Activated CD4-positive, alpha-beta memory T cell treated with anti-CD3 and anti-CD28 coated beads, Interleukin-2, amount 10 ng/mL, durations not matched to agents 7 days and 5 days (primary cell): ENCODE measurements at regions of chr20 and their contacts with region 1.

Region 1: DNA sequence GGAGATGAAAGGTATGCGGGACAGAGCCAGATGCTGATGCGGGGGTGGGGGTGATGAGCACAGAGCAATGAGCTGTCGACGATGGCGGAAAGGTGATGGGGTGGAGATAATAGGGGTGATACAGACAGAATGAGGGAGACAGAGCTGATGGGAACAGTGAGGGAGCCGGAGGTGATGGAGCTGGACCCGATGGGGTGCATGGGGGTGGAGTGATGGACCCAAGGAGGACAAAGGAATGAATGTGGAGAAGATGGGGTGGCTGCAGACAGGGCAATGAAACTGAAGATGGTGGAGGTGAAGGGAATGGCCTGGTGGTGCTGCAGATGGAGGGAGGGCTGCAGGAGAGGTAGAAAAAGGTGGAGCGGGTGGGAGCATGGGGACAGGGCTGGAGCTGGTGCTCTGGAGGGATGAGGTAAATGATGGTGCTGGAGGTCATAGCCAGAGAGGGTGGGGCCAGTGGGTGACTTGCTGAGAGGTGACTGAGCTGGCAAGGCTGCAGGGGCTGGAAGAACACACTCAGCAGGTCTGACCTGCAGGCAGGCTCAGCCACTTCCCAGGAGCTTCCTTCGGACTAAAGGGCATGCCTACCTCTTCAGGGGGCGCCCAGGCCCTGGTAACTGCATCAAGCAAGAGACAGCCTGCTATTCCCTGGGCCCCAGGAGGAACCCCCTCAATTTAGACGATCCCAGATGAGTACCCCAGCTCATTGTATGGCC is 6.0 kb upstream of the FOXS1 start:
- DNase-seq: no peak
- H3K4me3 Mint-ChIP-seq: no peak overlapping the region
- H3K27ac Mint-ChIP-seq: no peak overlapping the region
- H3K4me1 Mint-ChIP-seq: peaks cover 2% of the 10 kb centered on the region
- H3K27me3 Mint-ChIP-seq: peaks cover 30% of the 10 kb centered on the region

Region 2: DNA sequence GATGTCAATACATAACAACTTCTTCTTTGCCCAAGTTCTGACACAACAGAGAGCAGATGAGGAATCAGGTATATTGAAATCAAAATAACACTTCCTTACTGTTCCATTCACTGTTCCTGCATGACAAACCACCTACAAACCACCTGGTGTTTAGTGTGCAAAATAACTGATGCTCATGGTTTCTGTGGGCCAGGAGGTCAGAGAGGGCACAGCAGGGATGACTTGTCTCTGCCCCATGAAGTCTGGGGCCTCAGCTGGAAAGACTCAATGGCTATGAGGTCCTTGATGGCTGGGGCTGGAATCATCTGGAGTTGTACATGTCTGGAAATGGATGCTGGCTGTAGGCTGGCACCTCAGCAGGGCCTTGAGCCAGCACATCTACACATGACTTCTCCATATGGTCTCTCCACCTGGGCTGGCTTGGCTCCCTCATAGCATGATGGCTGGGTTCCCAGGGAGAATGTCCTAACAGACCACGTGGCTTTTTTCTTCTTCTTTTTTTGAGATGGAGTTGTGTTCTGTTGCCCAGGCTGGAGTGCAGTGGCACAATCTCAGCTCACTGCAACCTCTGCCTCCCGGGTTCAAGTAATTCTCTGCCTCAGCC is 221.1 kb before region 1 on chr20:
- CTCF ChIA-PET with region 1: no interaction called
- POLR2A ChIA-PET with region 1: no interaction called
- DNase-seq: no peak
- H3K4me3 Mint-ChIP-seq: no peak overlapping the region
- H3K27ac Mint-ChIP-seq: no peak overlapping the region
- H3K4me1 Mint-ChIP-seq: peaks cover 3% of the 10 kb centered on the region
- H3K27me3 Mint-ChIP-seq: no peaks in the 10 kb centered on the region

Region 3: DNA sequence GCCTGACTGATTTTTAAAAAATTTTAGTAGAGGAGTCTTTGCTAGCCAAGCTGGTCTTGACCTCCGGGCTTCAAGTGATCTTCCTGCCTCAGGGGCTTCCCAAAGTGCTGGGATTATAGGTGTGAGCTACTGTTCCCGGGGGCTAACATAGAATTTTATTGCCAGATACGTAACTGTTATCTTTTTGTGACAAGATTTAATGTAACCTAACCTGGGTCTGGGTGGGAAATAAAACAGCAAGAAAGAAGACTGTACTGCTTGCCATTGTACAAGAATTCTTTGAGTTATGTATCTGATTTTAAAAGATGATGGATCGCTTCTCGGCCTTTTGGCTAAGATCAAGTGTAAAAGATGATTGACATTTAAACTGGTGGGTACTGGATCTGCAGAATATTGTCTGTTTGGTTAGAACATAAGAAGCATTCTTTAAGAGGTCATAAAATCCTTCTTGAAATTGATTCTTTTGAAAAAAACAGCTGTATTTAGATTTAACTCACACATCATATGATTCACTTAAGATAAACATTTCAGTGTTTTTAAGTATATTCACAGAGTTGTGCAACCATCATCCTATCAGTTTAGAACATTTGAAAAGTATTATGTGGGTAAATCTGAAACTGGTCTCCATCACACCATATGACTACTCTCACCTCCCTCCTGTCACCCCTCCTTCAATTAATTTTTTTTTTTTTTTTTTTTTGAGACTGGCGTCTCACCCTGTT is 90.7 kb before region 1 on chr20:
- CTCF ChIA-PET with region 1: no interaction called
- POLR2A ChIA-PET with region 1: no interaction called
- DNase-seq: no peak
- H3K4me3 Mint-ChIP-seq: no peak overlapping the region
- H3K27ac Mint-ChIP-seq: no peak overlapping the region
- H3K4me1 Mint-ChIP-seq: peaks cover 7% of the 10 kb centered on the region
- H3K27me3 Mint-ChIP-seq: no peaks in the 10 kb centered on the region

Region 4: GRCh38 chr20:31861346-31862156 is 10.2 kb after region 1 on chr20:
- CTCF ChIA-PET with region 1: interaction called, 12 read pairs
- POLR2A ChIA-PET with region 1: no interaction called
- DNase-seq: peak; percentile 63
- H3K4me3 Mint-ChIP-seq: peak overlapping the region; percentile 32
- H3K27ac Mint-ChIP-seq: no peak overlapping the region
- H3K4me1 Mint-ChIP-seq: peaks cover 12% of the 10 kb centered on the region
- H3K27me3 Mint-ChIP-seq: peaks cover 36% of the 10 kb centered on the region

Region 5: GRCh38 chr20:31879143-31879987 is 28.0 kb after region 1 on chr20:
- CTCF ChIA-PET with region 1: interaction called, 11 read pairs
- POLR2A ChIA-PET with region 1: no interaction called
- DNase-seq: peak; percentile 85
- H3K4me3 Mint-ChIP-seq: peak overlapping the region; percentile 75
- H3K27ac Mint-ChIP-seq: peak overlapping the region; percentile 37
- H3K4me1 Mint-ChIP-seq: peaks cover 18% of the 10 kb centered on the region
- H3K27me3 Mint-ChIP-seq: peaks cover 28% of the 10 kb centered on the region

Region 6: DNA sequence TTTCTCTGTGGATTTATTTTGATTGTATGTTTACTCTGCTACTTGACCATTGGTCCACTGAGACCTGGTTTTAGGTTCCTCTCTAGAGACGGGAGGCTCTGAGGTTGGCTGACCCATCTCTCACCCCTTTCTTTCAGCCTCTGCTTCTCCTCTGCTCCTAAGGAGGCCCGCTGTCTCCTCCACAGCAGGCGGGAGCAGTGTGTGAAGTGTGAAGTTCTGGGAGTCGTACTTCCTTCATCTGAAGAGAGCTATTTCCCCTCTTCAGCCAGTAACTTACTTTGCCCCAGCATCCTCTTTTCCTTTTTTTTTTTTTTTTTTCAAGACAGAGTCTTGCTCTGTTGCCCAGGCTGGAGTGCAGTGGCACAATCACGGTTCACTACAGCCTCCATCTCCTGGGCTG is 79.4 kb after region 1 on chr20:
- CTCF ChIA-PET with region 1: no interaction called
- POLR2A ChIA-PET with region 1: no interaction called
- DNase-seq: no peak
- H3K4me3 Mint-ChIP-seq: no peak overlapping the region
- H3K27ac Mint-ChIP-seq: no peak overlapping the region
- H3K4me1 Mint-ChIP-seq: no peaks in the 10 kb centered on the region
- H3K27me3 Mint-ChIP-seq: peaks cover 21% of the 10 kb centered on the region

Region 7: DNA sequence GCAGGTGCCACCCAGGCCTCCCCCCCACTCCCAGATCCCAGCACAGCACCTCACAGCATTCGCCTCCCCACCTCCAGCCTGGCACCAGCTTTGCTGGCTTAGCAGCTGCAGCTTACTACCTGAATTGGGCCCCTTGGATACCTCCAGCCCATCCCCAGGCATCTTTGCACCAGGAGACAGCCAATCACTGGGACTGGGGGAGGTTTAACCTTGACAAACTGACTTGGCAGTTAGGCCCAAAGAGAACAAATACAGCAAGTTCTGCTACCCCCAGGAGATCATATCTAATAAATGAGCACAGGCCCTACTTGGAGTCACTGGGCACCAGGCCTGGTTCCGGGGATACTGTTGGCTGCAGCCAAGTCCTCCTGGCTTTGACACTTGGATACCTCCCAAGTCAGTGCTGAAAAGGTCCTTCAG is 91.7 kb after region 1 on chr20:
- CTCF ChIA-PET with region 1: interaction called, 11 read pairs
- POLR2A ChIA-PET with region 1: no interaction called
- DNase-seq: no peak
- H3K4me3 Mint-ChIP-seq: no peak overlapping the region
- H3K27ac Mint-ChIP-seq: no peak overlapping the region
- H3K4me1 Mint-ChIP-seq: no peaks in the 10 kb centered on the region
- H3K27me3 Mint-ChIP-seq: no peaks in the 10 kb centered on the region

Region 8: GRCh38 chr20:32031007-32031958 is 179.9 kb after region 1 on chr20:
- CTCF ChIA-PET with region 1: interaction called, 15 read pairs
- POLR2A ChIA-PET with region 1: no interaction called
- DNase-seq: peak; percentile 58
- H3K4me3 Mint-ChIP-seq: no peak overlapping the region
- H3K27ac Mint-ChIP-seq: no peak overlapping the region
- H3K4me1 Mint-ChIP-seq: no peaks in the 10 kb centered on the region
- H3K27me3 Mint-ChIP-seq: peaks cover 40% of the 10 kb centered on the region

Region 9: DNA sequence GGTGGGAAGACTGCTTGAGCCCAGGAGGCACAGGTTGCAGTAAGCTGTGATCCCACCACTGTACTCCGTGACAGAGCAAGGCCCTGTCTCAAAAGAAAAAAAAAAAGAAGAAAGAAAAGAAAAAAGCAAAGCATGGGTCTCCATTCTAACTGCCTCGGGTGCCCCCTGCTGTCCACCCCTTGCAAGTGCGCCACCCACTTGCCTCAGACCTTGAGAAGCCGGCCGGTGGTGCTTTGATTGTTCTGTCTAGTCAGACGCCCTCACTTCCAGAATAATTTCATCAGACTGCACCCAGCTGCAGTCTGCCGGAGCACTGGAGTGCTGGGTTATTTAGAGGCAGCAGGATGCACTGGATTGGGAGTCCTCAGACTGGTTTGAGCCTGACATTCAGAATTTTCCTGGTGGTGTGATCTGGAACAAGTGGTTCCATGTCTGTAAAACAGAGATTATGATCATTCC is 240.5 kb after region 1 on chr20:
- CTCF ChIA-PET with region 1: interaction called, 10 read pairs
- POLR2A ChIA-PET with region 1: no interaction called
- DNase-seq: peak; percentile 80
- H3K4me3 Mint-ChIP-seq: no peak overlapping the region
- H3K27ac Mint-ChIP-seq: no peak overlapping the region
- H3K4me1 Mint-ChIP-seq: no peaks in the 10 kb centered on the region
- H3K27me3 Mint-ChIP-seq: peaks cover 15% of the 10 kb centered on the region

Region 10: GRCh38 chr20:32240220-32240619 is 388.8 kb after region 1 on chr20:
- CTCF ChIA-PET with region 1: no interaction called
- POLR2A ChIA-PET with region 1: no interaction called
- DNase-seq: no peak
- H3K4me3 Mint-ChIP-seq: no peak overlapping the region
- H3K27ac Mint-ChIP-seq: no peak overlapping the region
- H3K4me1 Mint-ChIP-seq: peaks cover 8% of the 10 kb centered on the region
- H3K27me3 Mint-ChIP-seq: no peaks in the 10 kb centered on the region